ENCODE measurements at regions of chr12 and their contacts with region 1.

Region 1: DNA sequence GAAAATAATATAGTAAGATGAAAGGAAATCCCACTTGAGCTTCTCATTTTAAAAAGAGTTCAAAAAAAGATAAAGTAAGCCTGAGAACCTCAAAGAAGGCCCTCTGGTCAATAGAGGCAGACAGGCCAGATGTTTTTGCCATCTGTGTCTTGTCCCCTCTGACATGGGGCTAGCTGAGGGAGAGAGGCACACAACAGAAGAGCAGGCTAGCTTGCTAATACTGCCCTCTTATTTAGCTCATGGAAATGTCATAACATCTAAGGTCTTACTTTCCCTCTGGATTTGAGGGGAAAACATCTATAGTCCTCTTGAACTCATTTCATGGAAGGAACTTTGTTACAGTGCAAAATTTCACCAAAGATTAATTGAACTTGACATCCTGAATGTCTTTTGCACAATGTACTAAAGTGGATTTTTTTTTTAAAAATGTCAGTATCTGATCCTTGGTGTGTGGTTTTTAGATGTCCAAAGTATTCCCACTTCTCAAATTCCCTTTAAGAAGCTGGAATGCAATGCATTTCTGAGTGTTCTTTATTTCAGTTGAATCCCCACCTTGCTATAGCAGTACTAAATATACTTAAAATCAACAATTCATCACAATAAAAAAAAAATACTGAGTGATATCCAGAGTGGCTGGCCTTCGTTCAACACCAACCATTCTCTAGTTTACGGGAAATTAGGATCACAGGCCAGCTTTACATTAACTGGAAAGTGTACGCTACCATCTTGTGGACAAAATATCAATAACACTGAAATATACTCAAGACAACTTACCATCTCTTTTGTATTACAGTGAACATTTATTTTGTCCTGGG is 176.7 kb downstream of the PAH start:
- DNase-seq: no peak
- ATAC-seq: no peak
- H3K4me3 ChIP-seq: no peak overlapping the region
- H3K4me3 Mint-ChIP-seq: no peak overlapping the region
- H3K27ac ChIP-seq: no peak overlapping the region
- H3K27ac Mint-ChIP-seq: no peak overlapping the region
- H3K4me1 ChIP-seq: no peaks in the 10 kb centered on the region
- H3K4me1 Mint-ChIP-seq: no peaks in the 10 kb centered on the region
- H3K27me3 ChIP-seq: no peaks in the 10 kb centered on the region
- H3K27me3 Mint-ChIP-seq: no peaks in the 10 kb centered on the region

Region 2: DNA sequence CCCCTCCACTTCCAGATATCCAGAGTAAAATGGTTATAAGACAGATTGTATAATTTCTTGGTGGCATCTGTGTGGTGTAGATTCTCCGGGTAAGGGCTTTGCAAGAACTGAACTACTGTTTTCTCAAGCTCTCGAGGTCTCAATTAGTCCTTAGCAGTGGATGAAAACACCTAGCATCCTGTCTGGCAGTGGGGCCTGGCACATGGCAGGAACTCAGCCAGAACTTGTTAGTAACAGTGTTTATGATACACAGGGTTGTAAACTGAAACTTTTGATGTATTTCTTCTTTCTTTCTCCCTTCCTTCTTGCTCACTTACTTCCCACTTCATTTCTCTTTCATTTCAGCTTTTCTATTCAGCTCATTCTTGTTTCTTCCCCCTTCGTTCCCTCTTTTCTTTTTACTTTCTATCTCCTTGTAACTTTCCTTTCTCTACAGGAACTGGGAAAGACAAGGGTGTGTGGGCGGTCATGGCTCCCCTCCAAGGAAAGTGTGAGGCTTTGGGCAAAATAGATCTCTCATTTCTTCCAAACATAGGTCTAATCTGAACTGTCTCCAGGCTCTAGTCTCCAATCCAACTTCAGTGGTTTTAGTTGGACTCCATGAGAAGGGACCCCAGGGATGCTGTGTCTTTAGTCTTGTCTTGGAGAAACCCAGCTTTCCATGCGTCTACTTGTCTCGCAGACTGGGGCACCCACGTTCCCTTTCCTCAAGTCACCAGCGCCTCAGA is 17.0 kb after region 1 on chr12:
- CTCF ChIA-PET with region 1: no interaction called
- POLR2A ChIA-PET with region 1: interaction called in 1 of 2 experiments, 13 read pairs
- DNase-seq: no peak
- ATAC-seq: no peak
- H3K4me3 ChIP-seq: no peak overlapping the region
- H3K4me3 Mint-ChIP-seq: no peak overlapping the region
- H3K27ac ChIP-seq: no peak overlapping the region
- H3K27ac Mint-ChIP-seq: no peak overlapping the region
- H3K4me1 ChIP-seq: no peaks in the 10 kb centered on the region
- H3K4me1 Mint-ChIP-seq: no peaks in the 10 kb centered on the region
- H3K27me3 ChIP-seq: peaks cover 0 to 2% of the 10 kb centered on the region in 2 experiments
- H3K27me3 Mint-ChIP-seq: peaks cover 0 to 6% of the 10 kb centered on the region in 2 donors